Panc1 (cell line): ENCODE measurements at regions of chr3 and their contacts with region 1.

Region 1: GRCh38 chr3:47646362-47646761 is 67.7 kb upstream of the CSPG5 start:
- DNase-seq: no peak
- ATAC-seq: no peak
- H3K4me3 ChIP-seq: no peak overlapping the region
- H3K27ac ChIP-seq: no peak overlapping the region
- H3K4me1 ChIP-seq: no peaks in the 10 kb centered on the region
- H3K27me3 ChIP-seq: no peaks in the 10 kb centered on the region
- CTCF ChIP-seq: no peak

Region 2: GRCh38 chr3:47758263-47759025 is 112.1 kb after region 1 on chr3:
- CTCF ChIA-PET with region 1: no interaction called
- POLR2A ChIA-PET with region 1: interaction called, 15 read pairs
- in situ Hi-C with region 1: no loop called
- intact Hi-C with region 1: no loop called
- DNase-seq: no peak
- ATAC-seq: no peak
- H3K4me3 ChIP-seq: no peak overlapping the region
- H3K27ac ChIP-seq: no peak overlapping the region
- H3K4me1 ChIP-seq: no peaks in the 10 kb centered on the region
- H3K27me3 ChIP-seq: no peaks in the 10 kb centered on the region
- CTCF ChIP-seq: no peak